Gastrocnemius medialis (tissue), 4 donors: ENCODE measurements at regions of chr3 and their contacts with region 1.

Region 1: GRCh38 chr3:49906004-49906743 is 2.5 kb upstream of the MST1R start:
- DNase-seq: no peak
- ATAC-seq: peak in 1 of 2 donors; percentile 40
- H3K4me3 ChIP-seq: peak overlapping the region in 3 of 4 donors; percentile 23 to 50 (median 34)
- H3K27ac ChIP-seq: peak overlapping the region; percentile 18 to 59 (median 31)
- H3K4me1 ChIP-seq: peaks cover 4 to 11% of the 10 kb centered on the region in 2 donors
- H3K27me3 ChIP-seq: no peaks in the 10 kb centered on the region
- CTCF ChIP-seq: peak; percentile 31 to 66 (median 55)
- POLR2A ChIP-seq: no peak

Region 2: DNA sequence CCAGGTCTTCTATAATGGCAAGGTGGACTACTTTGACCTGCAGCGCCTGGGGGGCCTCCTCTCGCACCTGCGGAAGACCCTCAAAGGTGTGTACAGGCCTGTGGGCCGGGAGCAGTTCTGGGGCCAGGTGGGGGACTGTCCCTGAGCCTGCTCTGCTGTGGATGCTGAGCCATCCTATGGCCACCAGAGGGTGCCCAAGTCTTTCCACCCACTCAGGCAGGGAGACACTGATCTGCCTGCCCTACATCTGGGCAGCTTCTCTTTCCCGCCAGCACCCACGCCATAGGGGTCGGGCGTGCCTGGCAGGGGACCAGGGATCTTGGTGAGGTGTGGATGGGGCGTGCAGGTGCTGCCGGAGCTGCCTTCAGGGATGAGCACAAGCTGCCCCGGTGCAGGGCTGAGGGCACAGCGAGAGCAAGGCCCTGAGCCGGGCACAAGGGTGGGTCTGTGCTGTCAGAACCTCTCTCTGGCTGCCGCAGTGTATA is 202.7 kb before region 1 on chr3:
- in situ Hi-C with region 1: no loop called
- intact Hi-C with region 1: loop called (anchors 5 kb)
- DNase-seq: peak in 1 of 2 donors; percentile 75
- ATAC-seq: peak; percentile 84 to 90
- H3K4me3 ChIP-seq: no peak overlapping the region
- H3K27ac ChIP-seq: peak overlapping the region in 2 of 4 donors; percentile 32 to 68
- H3K4me1 ChIP-seq: no peaks in the 10 kb centered on the region
- H3K27me3 ChIP-seq: no peaks in the 10 kb centered on the region
- CTCF ChIP-seq: peak; percentile 75 to 84 (median 80)
- POLR2A ChIP-seq: no peak